ENCODE measurements at regions of chr5 and their contacts with region 1.

Region 1: GRCh38 chr5:172902497-172903200 is 56.6 kb upstream of the RPL26L1 start:
- DNase-seq: peak; percentile 75
- H3K4me3 Mint-ChIP-seq: peak overlapping the region; percentile 45
- H3K27ac Mint-ChIP-seq: peak overlapping the region; percentile 98
- H3K4me1 Mint-ChIP-seq: peaks cover 82% of the 10 kb centered on the region
- H3K27me3 Mint-ChIP-seq: no peaks in the 10 kb centered on the region
- CTCF ChIP-seq: peak; percentile 27

Region 2: GRCh38 chr5:172622091-172623046 is 280.3 kb before region 1 on chr5:
- CTCF ChIA-PET with region 1: no interaction called
- POLR2A ChIA-PET with region 1: no interaction called
- intact Hi-C with region 1: no loop called
- DNase-seq: peak; percentile 38
- H3K4me3 Mint-ChIP-seq: no peak overlapping the region
- H3K27ac Mint-ChIP-seq: no peak overlapping the region
- H3K4me1 Mint-ChIP-seq: peaks cover 10% of the 10 kb centered on the region
- H3K27me3 Mint-ChIP-seq: no peaks in the 10 kb centered on the region
- CTCF ChIP-seq: no peak

Region 3: GRCh38 chr5:172764849-172765765 is 137.5 kb before region 1 on chr5:
- CTCF ChIA-PET with region 1: interaction called, 35 read pairs
- POLR2A ChIA-PET with region 1: interaction called, 910 read pairs
- intact Hi-C with region 1: loop called (anchors 1 kb)
- DNase-seq: peak; percentile 100
- H3K4me3 Mint-ChIP-seq: peak overlapping the region; percentile 98
- H3K27ac Mint-ChIP-seq: peak overlapping the region; percentile 99
- H3K4me1 Mint-ChIP-seq: peaks cover 24% of the 10 kb centered on the region
- H3K27me3 Mint-ChIP-seq: no peaks in the 10 kb centered on the region
- CTCF ChIP-seq: no peak

Region 4: DNA sequence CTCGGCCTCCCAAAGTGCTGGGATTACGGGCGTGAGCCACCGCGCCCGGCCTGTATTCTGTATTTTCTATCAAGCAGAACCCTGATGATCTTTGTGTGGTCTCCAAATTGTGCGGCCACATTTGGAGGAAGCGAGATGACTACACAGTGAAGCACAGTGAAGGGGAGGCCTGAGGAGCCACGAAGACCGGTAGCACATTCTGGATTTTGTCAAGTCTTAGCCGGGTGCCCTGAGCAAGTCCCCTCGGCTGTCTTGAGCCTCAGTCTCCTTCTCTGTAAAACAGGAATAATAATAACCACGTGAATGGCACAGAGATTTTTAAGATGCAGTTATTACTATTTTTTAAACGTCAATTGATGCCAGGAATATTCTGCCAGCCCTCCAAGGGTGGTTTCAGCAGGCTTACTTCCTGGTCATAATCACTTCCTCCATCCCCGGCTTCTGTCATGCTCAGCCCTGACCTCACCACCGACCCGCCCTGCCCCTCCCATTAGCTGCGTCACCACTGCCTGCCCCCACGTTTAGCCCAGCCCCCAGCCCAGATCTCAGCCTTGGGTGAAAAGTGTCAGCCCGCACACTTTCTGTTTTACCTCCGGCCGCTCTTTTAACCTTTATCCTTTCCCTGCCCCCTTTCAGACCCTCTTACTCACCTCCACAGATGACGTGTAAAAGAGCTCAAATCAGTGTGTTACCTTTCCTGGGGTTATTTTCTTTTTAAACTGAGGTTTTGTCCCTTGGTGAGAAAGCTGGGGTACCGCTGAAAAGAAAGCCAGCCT is 95.6 kb before region 1 on chr5:
- CTCF ChIA-PET with region 1: no interaction called
- POLR2A ChIA-PET with region 1: interaction called, 12 read pairs
- intact Hi-C with region 1: no loop called
- DNase-seq: peak; percentile 95
- H3K4me3 Mint-ChIP-seq: peak overlapping the region; percentile 61
- H3K27ac Mint-ChIP-seq: peak overlapping the region; percentile 90
- H3K4me1 Mint-ChIP-seq: peaks cover 23% of the 10 kb centered on the region
- H3K27me3 Mint-ChIP-seq: no peaks in the 10 kb centered on the region
- CTCF ChIP-seq: no peak

Region 5: DNA sequence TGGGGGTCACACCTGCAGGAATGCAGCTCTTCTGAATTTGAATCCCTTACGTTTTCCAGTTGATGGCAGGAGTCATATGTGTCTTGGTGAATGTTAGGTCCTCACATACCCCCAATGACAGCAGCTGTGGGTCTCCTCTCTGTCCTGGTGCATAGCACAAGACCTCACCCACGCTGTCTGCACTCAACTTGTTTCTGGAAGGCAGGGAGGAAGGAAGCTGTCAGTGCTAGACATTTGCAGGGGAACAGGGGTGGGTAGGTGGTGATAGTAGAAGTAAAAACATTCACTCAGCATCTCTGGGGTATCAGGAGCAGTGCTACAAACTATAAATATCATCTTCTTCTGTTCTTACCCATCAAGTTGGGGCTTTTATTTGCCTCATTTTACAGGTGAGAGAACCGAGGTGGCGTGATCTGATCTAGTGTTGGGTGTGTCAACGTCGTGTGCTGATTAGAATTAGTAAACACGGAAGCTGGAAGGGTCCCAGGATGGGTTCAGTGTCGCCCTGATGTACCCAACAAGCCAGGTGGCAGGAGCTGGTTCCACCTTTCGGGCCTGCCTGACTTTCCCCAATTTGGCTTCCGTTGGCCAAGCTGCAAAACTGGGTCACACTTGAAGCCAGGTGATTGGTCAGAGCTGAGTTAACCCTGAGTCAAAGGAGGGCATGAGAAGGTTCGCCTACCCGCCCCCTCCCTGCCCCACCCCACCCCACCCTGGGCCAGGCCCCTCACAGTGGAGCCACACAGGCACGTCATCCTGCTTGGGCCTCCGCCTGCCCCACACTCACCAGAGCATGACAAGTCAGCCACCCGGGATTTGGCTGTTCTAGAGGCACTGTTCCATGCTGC is 52.8 kb before region 1 on chr5:
- CTCF ChIA-PET with region 1: interaction called, 6 read pairs
- POLR2A ChIA-PET with region 1: interaction called, 13 read pairs
- intact Hi-C with region 1: loop called (anchors 5 kb)
- DNase-seq: peak; percentile 68
- H3K4me3 Mint-ChIP-seq: no peak overlapping the region
- H3K27ac Mint-ChIP-seq: peak overlapping the region; percentile 49
- H3K4me1 Mint-ChIP-seq: peaks cover 78% of the 10 kb centered on the region
- H3K27me3 Mint-ChIP-seq: no peaks in the 10 kb centered on the region
- CTCF ChIP-seq: no peak

Region 6: GRCh38 chr5:172886974-172887501 is 15.6 kb before region 1 on chr5:
- CTCF ChIA-PET with region 1: interaction called, 7 read pairs
- POLR2A ChIA-PET with region 1: interaction called, 131 read pairs
- intact Hi-C with region 1: loop called (anchors 1 kb)
- DNase-seq: peak; percentile 100
- H3K4me3 Mint-ChIP-seq: peak overlapping the region; percentile 61
- H3K27ac Mint-ChIP-seq: peak overlapping the region; percentile 98
- H3K4me1 Mint-ChIP-seq: peaks cover 46% of the 10 kb centered on the region
- H3K27me3 Mint-ChIP-seq: no peaks in the 10 kb centered on the region
- CTCF ChIP-seq: no peak

Measured in MCF 10A (cell line).